Activated CD4-positive, alpha-beta memory T cell treated with anti-CD3 and anti-CD28 coated beads for 36 hours (primary cell): ENCODE measurements at regions of chr16 and their contacts with region 1.

Region 1: GRCh38 chr16:48609652-48610029 is 339 bp downstream of the N4BP1 start:
- DNase-seq: no peak
- H3K4me3 Mint-ChIP-seq: no peak overlapping the region
- H3K27ac Mint-ChIP-seq: no peak overlapping the region
- H3K4me1 Mint-ChIP-seq: peaks cover 42% of the 10 kb centered on the region
- H3K27me3 Mint-ChIP-seq: no peaks in the 10 kb centered on the region

Region 2: DNA sequence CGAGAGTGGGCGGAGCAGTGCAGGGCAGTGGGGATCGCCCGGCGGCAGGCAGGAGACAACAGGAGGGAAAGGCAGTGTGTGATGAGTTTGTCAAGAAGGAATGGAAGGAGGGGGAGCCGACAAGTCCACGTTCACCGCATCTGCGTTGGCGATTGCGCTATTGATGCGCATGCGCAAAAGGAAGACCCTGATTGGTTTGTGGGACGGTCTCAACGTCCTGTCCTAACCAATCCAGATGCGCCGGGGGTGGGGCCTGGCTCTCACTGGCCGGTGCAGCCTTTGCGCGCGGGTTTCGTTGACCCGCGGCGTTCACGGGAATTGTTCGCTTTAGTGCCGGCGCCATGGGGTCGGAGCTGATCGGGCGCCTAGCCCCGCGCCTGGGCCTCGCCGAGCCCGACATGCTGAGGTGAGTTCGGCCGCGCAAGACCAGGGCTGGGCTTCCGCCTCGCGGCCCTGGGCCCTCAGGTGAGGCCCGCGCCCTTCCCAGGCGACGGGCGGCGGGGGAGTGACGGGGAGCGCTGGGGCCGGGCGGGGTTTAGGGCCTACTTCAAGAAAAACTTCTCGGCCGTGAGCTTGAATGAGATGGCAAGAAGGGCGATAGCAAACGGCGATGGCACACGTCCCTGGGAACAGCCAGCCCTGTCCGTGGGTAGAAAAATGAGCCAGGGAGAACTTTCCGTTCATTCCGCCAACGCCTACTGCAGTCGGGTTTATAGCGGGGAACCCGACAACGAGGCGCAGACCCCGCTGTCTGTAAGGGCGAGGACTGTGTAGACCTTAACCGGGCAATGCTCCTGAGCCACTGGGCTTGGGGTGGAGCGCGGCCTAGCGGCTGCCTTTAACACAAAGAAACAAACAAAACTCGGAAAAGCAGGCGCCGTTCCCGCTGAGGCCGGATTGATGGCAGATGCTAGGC is 1920.0 kb before region 1 on chr16 and contains the start of gene ORC6:
- CTCF ChIA-PET with region 1: no interaction called
- POLR2A ChIA-PET with region 1: no interaction called
- intact Hi-C with region 1: loop called (anchors 2 kb)
- DNase-seq: peak; percentile 98
- H3K4me3 Mint-ChIP-seq: no peak within 1 kb of the TSS
- H3K27ac Mint-ChIP-seq: no peak within 1 kb of the TSS
- H3K4me1 Mint-ChIP-seq: peaks cover 42% of the 10 kb centered on the region
- H3K27me3 Mint-ChIP-seq: no peaks in the 10 kb centered on the region
- total RNA-seq, gene ORC6: 48.6 to 51.7 TPM

Region 3: GRCh38 chr16:47574091-47575054 is 1035.3 kb before region 1 on chr16:
- CTCF ChIA-PET with region 1: no interaction called
- POLR2A ChIA-PET with region 1: no interaction called
- intact Hi-C with region 1: loop called (anchors 5 kb)
- DNase-seq: peak; percentile 67
- H3K4me3 Mint-ChIP-seq: peak overlapping the region; percentile 26
- H3K27ac Mint-ChIP-seq: peak overlapping the region; percentile 80
- H3K4me1 Mint-ChIP-seq: peaks cover 64% of the 10 kb centered on the region
- H3K27me3 Mint-ChIP-seq: no peaks in the 10 kb centered on the region

Region 4: GRCh38 chr16:48448826-48449481 is 160.7 kb before region 1 on chr16:
- CTCF ChIA-PET with region 1: no interaction called
- POLR2A ChIA-PET with region 1: no interaction called
- intact Hi-C with region 1: no loop called
- DNase-seq: no peak
- H3K4me3 Mint-ChIP-seq: no peak overlapping the region
- H3K27ac Mint-ChIP-seq: no peak overlapping the region
- H3K4me1 Mint-ChIP-seq: no peaks in the 10 kb centered on the region
- H3K27me3 Mint-ChIP-seq: no peaks in the 10 kb centered on the region

Region 5: GRCh38 chr16:48459167-48459566 is 150.5 kb before region 1 on chr16:
- CTCF ChIA-PET with region 1: no interaction called
- POLR2A ChIA-PET with region 1: interaction called, 3 read pairs
- intact Hi-C with region 1: loop called (anchors 2 kb)
- DNase-seq: no peak
- H3K4me3 Mint-ChIP-seq: no peak overlapping the region
- H3K27ac Mint-ChIP-seq: no peak overlapping the region
- H3K4me1 Mint-ChIP-seq: peaks cover 13% of the 10 kb centered on the region
- H3K27me3 Mint-ChIP-seq: peaks cover 31% of the 10 kb centered on the region

Region 6: GRCh38 chr16:48576927-48577326 is 32.7 kb before region 1 on chr16:
- CTCF ChIA-PET with region 1: interaction called, 4 read pairs
- POLR2A ChIA-PET with region 1: no interaction called
- intact Hi-C with region 1: loop called (anchors 1 kb)
- DNase-seq: peak; percentile 55
- H3K4me3 Mint-ChIP-seq: no peak overlapping the region
- H3K27ac Mint-ChIP-seq: peak overlapping the region; percentile 76
- H3K4me1 Mint-ChIP-seq: peaks cover 56% of the 10 kb centered on the region
- H3K27me3 Mint-ChIP-seq: no peaks in the 10 kb centered on the region

Region 7: DNA sequence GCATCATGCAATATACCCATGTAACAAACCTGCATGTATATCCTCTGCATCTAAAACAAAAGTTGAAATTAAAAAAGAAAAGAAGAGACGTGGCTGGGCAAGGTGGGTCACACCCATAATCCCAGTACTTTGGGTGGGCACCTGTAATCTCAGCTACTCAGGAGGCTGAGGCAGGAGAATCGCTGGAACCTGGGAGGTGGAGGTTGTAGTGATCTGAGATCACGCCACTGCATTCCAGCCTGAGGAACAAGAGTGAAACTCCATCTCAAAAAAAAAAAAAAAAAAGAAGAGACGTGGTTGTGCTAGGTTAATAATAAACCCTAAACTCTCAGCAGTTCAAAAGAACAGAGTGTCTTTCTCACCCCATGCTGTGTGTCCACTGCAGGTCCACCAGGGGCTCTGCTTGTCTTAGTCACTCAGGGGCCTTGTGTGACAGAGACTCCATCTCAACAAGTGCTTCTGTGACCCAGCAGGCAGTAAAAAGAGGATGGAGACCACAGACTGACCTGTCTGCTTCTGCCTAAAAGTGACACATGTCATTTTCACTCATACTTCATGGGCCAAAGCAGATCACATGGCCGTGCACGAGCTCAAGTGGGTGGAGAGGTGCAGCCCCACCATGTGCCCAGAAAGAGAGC is 22.6 kb after region 1 on chr16:
- CTCF ChIA-PET with region 1: interaction called, 19 read pairs
- POLR2A ChIA-PET with region 1: interaction called, 6 read pairs
- intact Hi-C with region 1: no loop called
- DNase-seq: no peak
- H3K4me3 Mint-ChIP-seq: no peak overlapping the region
- H3K27ac Mint-ChIP-seq: no peak overlapping the region
- H3K4me1 Mint-ChIP-seq: peaks cover 8% of the 10 kb centered on the region
- H3K27me3 Mint-ChIP-seq: peaks cover 2% of the 10 kb centered on the region

Region 8: GRCh38 chr16:48946686-48947370 is 337.2 kb after region 1 on chr16:
- CTCF ChIA-PET with region 1: no interaction called
- POLR2A ChIA-PET with region 1: no interaction called
- intact Hi-C with region 1: no loop called
- DNase-seq: no peak
- H3K4me3 Mint-ChIP-seq: no peak overlapping the region
- H3K27ac Mint-ChIP-seq: no peak overlapping the region
- H3K4me1 Mint-ChIP-seq: no peaks in the 10 kb centered on the region
- H3K27me3 Mint-ChIP-seq: no peaks in the 10 kb centered on the region

Region 9: GRCh38 chr16:50266337-50267091 is 1656.9 kb after region 1 on chr16 and contains the start of gene ADCY7:
- CTCF ChIA-PET with region 1: no interaction called
- POLR2A ChIA-PET with region 1: no interaction called
- intact Hi-C with region 1: loop called (anchors 10 kb)
- DNase-seq: peak; percentile 91
- H3K4me3 Mint-ChIP-seq: peak within 1 kb of the TSS; percentile 94
- H3K27ac Mint-ChIP-seq: peak within 1 kb of the TSS; percentile 97
- H3K4me1 Mint-ChIP-seq: peaks cover 71% of the 10 kb centered on the region
- H3K27me3 Mint-ChIP-seq: no peaks in the 10 kb centered on the region
- total RNA-seq, gene ADCY7: 100.0 to 107 TPM